HepG2 (cell line): ENCODE measurements at regions of chr4 and their contacts with region 1.

Region 1: DNA sequence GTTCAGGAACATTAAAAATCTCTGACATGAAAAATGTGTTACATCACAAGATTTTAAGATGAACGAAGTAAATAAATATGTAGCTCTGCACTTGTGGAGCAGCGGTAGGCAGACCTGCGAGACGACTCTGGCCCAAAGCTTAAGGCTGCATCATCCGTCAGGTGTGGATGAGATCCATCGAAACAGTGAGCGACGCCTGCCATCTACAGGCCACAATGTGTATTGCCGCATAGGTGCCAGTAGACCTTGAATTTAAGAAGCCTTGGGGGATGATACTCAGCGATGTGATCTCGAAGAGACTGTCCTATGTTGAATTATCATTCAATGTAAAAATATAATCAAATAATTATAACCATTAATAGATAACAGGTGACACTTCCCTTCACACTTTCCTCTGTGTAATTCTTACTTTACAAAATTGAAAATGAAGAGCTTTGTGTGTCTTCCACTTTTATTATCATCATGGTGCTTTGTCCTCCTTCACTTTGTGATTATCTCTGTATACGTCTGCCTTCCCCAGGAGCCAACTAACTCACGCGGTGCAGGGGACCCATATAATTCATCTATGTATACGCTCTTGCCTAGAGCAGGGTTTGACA is 851.0 kb downstream of the RAB28 start:
- DNase-seq: peak; percentile 57
- ATAC-seq: peak; percentile 98
- H3K4me3 ChIP-seq: no peak overlapping the region
- H3K27ac ChIP-seq: no peak overlapping the region
- H3K4me1 ChIP-seq: no peaks in the 10 kb centered on the region
- H3K27me3 ChIP-seq: no peaks in the 10 kb centered on the region
- CTCF ChIP-seq: peak; percentile 94
- EP300 ChIP-seq: no peak
- POLR2A ChIP-seq: no peak
- RAD21 ChIP-seq: peak; percentile 87

Region 2: GRCh38 chr4:11471618-11472017 is 1161.5 kb before region 1 on chr4:
- CTCF ChIA-PET with region 1: no interaction called
- POLR2A ChIA-PET with region 1: no interaction called
- in situ Hi-C with region 1: loop called (anchors 25 kb)
- intact Hi-C with region 1: no loop called
- DNase-seq: no peak
- ATAC-seq: no peak
- H3K4me3 ChIP-seq: no peak overlapping the region
- H3K27ac ChIP-seq: no peak overlapping the region
- H3K4me1 ChIP-seq: no peaks in the 10 kb centered on the region
- H3K27me3 ChIP-seq: no peaks in the 10 kb centered on the region
- CTCF ChIP-seq: no peak
- EP300 ChIP-seq: no peak
- POLR2A ChIP-seq: no peak
- RAD21 ChIP-seq: no peak

Region 3: GRCh38 chr4:11487876-11488544 is 1145.1 kb before region 1 on chr4:
- CTCF ChIA-PET with region 1: no interaction called
- POLR2A ChIA-PET with region 1: no interaction called
- in situ Hi-C with region 1: no loop called
- intact Hi-C with region 1: loop called (anchors 5 kb)
- DNase-seq: no peak
- ATAC-seq: no peak
- H3K4me3 ChIP-seq: no peak overlapping the region
- H3K27ac ChIP-seq: no peak overlapping the region
- H3K4me1 ChIP-seq: no peaks in the 10 kb centered on the region
- H3K27me3 ChIP-seq: no peaks in the 10 kb centered on the region
- CTCF ChIP-seq: no peak
- EP300 ChIP-seq: no peak
- POLR2A ChIP-seq: no peak
- RAD21 ChIP-seq: no peak

Region 4: DNA sequence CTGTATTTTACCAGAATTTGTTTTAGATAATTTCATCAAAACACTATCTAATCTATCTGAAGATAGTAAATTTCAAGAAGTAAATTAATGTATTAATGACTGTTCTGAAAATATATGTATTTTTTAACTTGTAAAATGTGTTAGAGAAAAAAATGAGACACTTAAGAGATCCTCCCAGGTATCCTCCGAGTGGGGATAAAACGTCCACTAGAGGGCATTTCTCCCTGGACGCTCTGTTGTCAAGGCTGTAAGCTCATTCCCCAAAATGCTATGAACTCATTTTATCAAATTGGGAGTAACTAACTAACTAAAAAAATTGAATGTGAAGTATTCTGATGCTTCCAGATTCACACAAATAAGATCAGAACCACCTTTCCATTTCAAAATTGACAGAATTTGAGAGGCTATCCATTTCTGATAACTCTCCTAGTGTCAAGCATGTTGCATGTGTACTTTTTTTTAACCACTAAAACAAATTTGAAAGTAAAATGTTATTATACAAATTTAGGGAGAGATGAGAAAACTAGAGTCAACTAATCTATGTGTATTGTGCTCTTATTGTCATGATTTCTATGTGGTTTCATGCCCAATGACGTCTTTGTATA is 867.2 kb before region 1 on chr4:
- CTCF ChIA-PET with region 1: interaction called, 8 read pairs
- POLR2A ChIA-PET with region 1: no interaction called
- in situ Hi-C with region 1: loop called (anchors 5 kb)
- intact Hi-C with region 1: loop called (anchors 1 kb)
- DNase-seq: peak; percentile 15
- ATAC-seq: peak; percentile 67
- H3K4me3 ChIP-seq: no peak overlapping the region
- H3K27ac ChIP-seq: no peak overlapping the region
- H3K4me1 ChIP-seq: peaks cover 10% of the 10 kb centered on the region
- H3K27me3 ChIP-seq: no peaks in the 10 kb centered on the region
- CTCF ChIP-seq: peak; percentile 49
- EP300 ChIP-seq: no peak
- POLR2A ChIP-seq: no peak
- RAD21 ChIP-seq: no peak

Region 5: GRCh38 chr4:12041828-12042227 is 591.3 kb before region 1 on chr4:
- CTCF ChIA-PET with region 1: no interaction called
- POLR2A ChIA-PET with region 1: no interaction called
- in situ Hi-C with region 1: no loop called
- intact Hi-C with region 1: loop called (anchors 5 kb)
- DNase-seq: no peak
- ATAC-seq: no peak
- H3K4me3 ChIP-seq: no peak overlapping the region
- H3K27ac ChIP-seq: no peak overlapping the region
- H3K4me1 ChIP-seq: no peaks in the 10 kb centered on the region
- H3K27me3 ChIP-seq: no peaks in the 10 kb centered on the region
- CTCF ChIP-seq: 0 out of 2 replicates have a peak, but pooled peaks have one; percentile 13
- EP300 ChIP-seq: no peak
- POLR2A ChIP-seq: no peak
- RAD21 ChIP-seq: no peak

Region 6: DNA sequence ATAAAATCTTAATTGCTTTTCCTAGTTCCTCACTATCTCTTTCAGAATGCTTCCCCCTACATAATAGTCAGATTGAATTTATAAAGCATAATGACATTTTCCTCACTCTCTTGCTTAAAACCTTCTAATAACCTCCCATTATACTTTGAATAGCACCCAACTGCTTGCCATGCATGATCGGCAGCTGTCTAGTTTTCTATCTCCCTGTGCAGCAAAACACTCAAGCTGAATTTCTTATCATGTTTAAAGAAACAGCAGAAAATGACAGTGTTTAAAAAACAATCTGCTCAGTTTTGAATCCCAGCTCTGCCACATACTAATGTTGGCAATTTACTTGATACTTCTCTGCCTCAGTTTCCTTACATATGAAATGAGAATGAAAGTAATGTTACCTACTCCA is 257.3 kb before region 1 on chr4:
- CTCF ChIA-PET with region 1: no interaction called
- POLR2A ChIA-PET with region 1: no interaction called
- in situ Hi-C with region 1: no loop called
- intact Hi-C with region 1: loop called (anchors 1 kb)
- DNase-seq: no peak
- ATAC-seq: no peak
- H3K4me3 ChIP-seq: no peak overlapping the region
- H3K27ac ChIP-seq: no peak overlapping the region
- H3K4me1 ChIP-seq: no peaks in the 10 kb centered on the region
- H3K27me3 ChIP-seq: no peaks in the 10 kb centered on the region
- CTCF ChIP-seq: no peak
- EP300 ChIP-seq: no peak
- POLR2A ChIP-seq: no peak
- RAD21 ChIP-seq: no peak

Region 7: GRCh38 chr4:12881945-12882584 is 248.9 kb after region 1 on chr4:
- CTCF ChIA-PET with region 1: no interaction called
- POLR2A ChIA-PET with region 1: no interaction called
- in situ Hi-C with region 1: no loop called
- intact Hi-C with region 1: no loop called
- DNase-seq: no peak
- ATAC-seq: peak; percentile 68
- H3K4me3 ChIP-seq: no peak overlapping the region
- H3K27ac ChIP-seq: no peak overlapping the region
- H3K4me1 ChIP-seq: peaks cover 32% of the 10 kb centered on the region
- H3K27me3 ChIP-seq: no peaks in the 10 kb centered on the region
- CTCF ChIP-seq: no peak
- EP300 ChIP-seq: no peak
- POLR2A ChIP-seq: no peak
- RAD21 ChIP-seq: no peak